ENCODE measurements at regions of chrX and their contacts with region 1.

Region 1: GRCh38 chrX:68462653-68463052 is 29.4 kb upstream of the OPHN1 start:
- DNase-seq: peak in 4 of 9 experiments; percentile 8 to 61 (median 29)
- ATAC-seq: peak; percentile 46
- H3K4me3 ChIP-seq: no peak overlapping the region
- H3K4me3 Mint-ChIP-seq: no peak overlapping the region
- H3K27ac ChIP-seq: no peak overlapping the region
- H3K27ac Mint-ChIP-seq: no peak overlapping the region
- H3K4me1 ChIP-seq: no peaks in the 10 kb centered on the region
- H3K4me1 Mint-ChIP-seq: no peaks in the 10 kb centered on the region
- H3K27me3 ChIP-seq: no peaks in the 10 kb centered on the region
- H3K27me3 Mint-ChIP-seq: peaks cover 2% of the 10 kb centered on the region
- CTCF ChIP-seq: peak; percentile 43

Region 2: DNA sequence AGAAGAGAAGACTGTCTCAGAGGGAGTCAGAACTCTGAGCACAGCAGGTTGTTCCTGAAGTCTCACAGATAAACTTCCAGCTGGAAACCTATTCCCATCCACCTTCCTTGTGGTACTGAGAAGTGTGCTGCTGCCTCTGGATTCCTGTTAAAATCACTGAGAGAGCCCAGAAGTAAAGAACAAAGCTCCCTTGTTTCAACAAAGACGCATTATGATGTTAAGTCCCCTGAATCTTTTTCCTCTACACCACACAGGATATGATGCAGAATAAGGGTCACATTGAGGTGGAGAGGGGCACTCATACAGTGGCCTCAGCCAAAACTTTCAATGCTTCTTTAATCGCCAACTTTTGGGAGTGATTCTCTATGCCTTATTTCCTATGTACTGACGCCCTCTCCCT is 350.3 kb before region 1 on chrX:
- CTCF ChIA-PET with region 1: no interaction called
- POLR2A ChIA-PET with region 1: no interaction called
- intact Hi-C with region 1: no loop called
- DNase-seq: no peak
- ATAC-seq: no peak
- H3K4me3 ChIP-seq: no peak overlapping the region
- H3K4me3 Mint-ChIP-seq: no peak overlapping the region
- H3K27ac ChIP-seq: no peak overlapping the region
- H3K27ac Mint-ChIP-seq: no peak overlapping the region
- H3K4me1 ChIP-seq: no peaks in the 10 kb centered on the region
- H3K4me1 Mint-ChIP-seq: no peaks in the 10 kb centered on the region
- H3K27me3 ChIP-seq: no peaks in the 10 kb centered on the region
- H3K27me3 Mint-ChIP-seq: no peaks in the 10 kb centered on the region
- CTCF ChIP-seq: no peak

Region 3: GRCh38 chrX:68196939-68197791 is 265.5 kb before region 1 on chrX:
- CTCF ChIA-PET with region 1: interaction called, 3 read pairs
- POLR2A ChIA-PET with region 1: no interaction called
- intact Hi-C with region 1: loop called in 1 of 2 experiments (anchors 10 kb)
- DNase-seq: peak in 3 of 9 experiments; percentile 10 to 43 (median 30)
- ATAC-seq: no peak
- H3K4me3 ChIP-seq: no peak overlapping the region
- H3K4me3 Mint-ChIP-seq: no peak overlapping the region
- H3K27ac ChIP-seq: no peak overlapping the region
- H3K27ac Mint-ChIP-seq: no peak overlapping the region
- H3K4me1 ChIP-seq: no peaks in the 10 kb centered on the region
- H3K4me1 Mint-ChIP-seq: no peaks in the 10 kb centered on the region
- H3K27me3 ChIP-seq: no peaks in the 10 kb centered on the region
- H3K27me3 Mint-ChIP-seq: no peaks in the 10 kb centered on the region
- CTCF ChIP-seq: no peak

Region 4: DNA sequence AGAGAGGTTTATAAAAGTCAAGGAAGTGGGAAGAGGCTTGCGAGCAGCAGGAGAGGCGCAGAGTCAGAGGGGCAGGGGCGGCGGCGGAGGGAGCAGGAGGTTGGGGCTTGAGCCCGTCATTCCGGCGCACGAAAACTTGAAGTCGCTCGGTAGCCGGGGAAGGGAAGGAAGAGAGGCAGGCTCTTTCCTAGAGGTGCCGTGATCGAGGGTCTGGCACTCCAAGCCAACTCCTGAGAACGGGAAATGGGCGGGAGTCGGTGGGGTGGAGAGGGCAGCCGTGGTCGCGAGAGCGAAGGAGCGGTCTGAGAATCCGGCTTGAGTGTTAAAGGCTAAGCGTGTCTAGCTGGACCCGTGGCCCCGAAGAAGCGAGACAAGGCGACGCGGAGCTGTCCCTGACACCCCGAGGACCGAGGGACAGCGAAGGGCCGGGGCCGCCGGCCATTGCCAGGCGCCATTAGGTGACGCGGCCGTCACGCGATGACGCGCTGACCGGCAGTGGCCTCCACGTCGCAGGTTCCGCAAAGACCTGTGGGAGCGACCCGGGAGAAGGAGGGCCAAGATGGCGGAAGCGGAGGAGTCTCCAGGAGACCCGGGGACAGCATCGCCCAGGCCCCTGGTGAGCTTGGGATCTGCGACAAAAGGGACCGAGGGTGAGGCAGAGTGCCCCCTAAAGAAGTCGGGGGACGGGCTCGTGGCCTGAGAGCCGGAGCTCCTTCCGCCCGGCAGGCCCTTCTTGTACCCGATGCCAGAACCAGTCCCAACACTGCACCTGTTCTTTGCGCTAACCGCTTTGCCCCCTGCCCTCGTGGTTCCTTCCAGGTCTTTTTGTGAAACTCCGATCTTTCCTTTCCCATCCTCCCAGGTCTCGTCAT is 36.1 kb after region 1 on chrX and contains the start of gene YIPF6:
- CTCF ChIA-PET with region 1: no interaction called
- POLR2A ChIA-PET with region 1: no interaction called
- intact Hi-C with region 1: no loop called
- DNase-seq: peak; percentile 35 to 81 (median 52)
- ATAC-seq: peak; percentile 84
- H3K4me3 ChIP-seq: peak within 1 kb of the TSS; percentile 88 to 93
- H3K4me3 Mint-ChIP-seq: peak within 1 kb of the TSS; percentile 97
- H3K27ac ChIP-seq: peak within 1 kb of the TSS; percentile 87 to 98
- H3K27ac Mint-ChIP-seq: peak within 1 kb of the TSS; percentile 97
- H3K4me1 ChIP-seq: peaks cover 6% of the 10 kb centered on the region
- H3K4me1 Mint-ChIP-seq: peaks cover 38% of the 10 kb centered on the region
- H3K27me3 ChIP-seq: no peaks in the 10 kb centered on the region
- H3K27me3 Mint-ChIP-seq: peaks cover 3% of the 10 kb centered on the region
- CTCF ChIP-seq: no peak
- total RNA-seq, gene YIPF6: 7.8 to 10.4 TPM

Region 5: GRCh38 chrX:68568136-68568535 is 105.5 kb after region 1 on chrX:
- CTCF ChIA-PET with region 1: no interaction called
- POLR2A ChIA-PET with region 1: no interaction called
- intact Hi-C with region 1: no loop called
- DNase-seq: no peak
- ATAC-seq: no peak
- H3K4me3 ChIP-seq: no peak overlapping the region
- H3K4me3 Mint-ChIP-seq: no peak overlapping the region
- H3K27ac ChIP-seq: no peak overlapping the region
- H3K27ac Mint-ChIP-seq: no peak overlapping the region
- H3K4me1 ChIP-seq: no peaks in the 10 kb centered on the region
- H3K4me1 Mint-ChIP-seq: no peaks in the 10 kb centered on the region
- H3K27me3 ChIP-seq: no peaks in the 10 kb centered on the region
- H3K27me3 Mint-ChIP-seq: no peaks in the 10 kb centered on the region
- CTCF ChIP-seq: no peak